AG04450 (cell line): ENCODE measurements at regions of chr2 and their contacts with region 1.

Region 1: DNA sequence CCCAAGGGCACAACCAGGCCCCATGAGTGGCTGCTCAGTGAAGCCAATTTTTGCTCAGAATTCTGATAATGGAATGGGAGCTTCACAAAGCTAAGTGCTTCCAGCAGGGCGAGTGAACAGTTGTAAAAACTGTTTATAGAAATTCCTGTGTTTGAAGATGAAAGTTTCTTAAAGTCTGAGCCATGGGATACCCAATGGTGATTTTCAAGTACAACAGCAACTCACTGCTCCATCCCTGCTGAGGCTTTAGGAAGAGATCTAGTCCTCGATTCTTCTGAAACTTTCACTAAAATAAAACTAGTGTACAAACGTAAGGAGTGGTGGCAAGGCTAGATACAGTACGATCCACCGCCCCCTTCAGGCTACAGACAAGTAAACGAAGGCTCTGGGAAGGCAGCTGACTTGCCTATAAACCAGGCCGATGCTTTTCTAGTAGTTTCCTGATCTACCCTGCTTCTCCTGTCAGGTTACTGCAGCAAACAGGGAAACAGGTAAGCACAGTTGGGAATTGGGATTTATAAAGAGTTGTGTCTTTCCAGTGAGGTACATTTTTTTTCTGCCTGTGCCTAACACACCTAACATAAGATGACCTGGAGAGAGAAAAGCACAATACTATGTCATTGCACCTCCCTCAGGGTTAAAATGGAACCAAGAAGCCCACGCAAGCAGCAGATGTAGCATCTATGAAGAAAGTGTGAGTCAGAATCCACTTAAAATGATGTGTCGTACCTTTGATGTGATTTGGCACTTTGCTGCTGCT is 108.7 kb downstream of the UXS1 start:
- DNase-seq: peak; percentile 3
- H3K4me3 ChIP-seq: no peak overlapping the region
- H3K27ac ChIP-seq: no peak overlapping the region
- H3K27me3 ChIP-seq: no peaks in the 10 kb centered on the region
- CTCF ChIP-seq: peak; percentile 60

Region 2: GRCh38 chr2:105576440-105577252 is 508.7 kb before region 1 on chr2:
- CTCF ChIA-PET with region 1: interaction called, 11 read pairs
- POLR2A ChIA-PET with region 1: no interaction called
- DNase-seq: no peak
- H3K4me3 ChIP-seq: no peak overlapping the region
- H3K27ac ChIP-seq: no peak overlapping the region
- H3K27me3 ChIP-seq: peaks cover 14% of the 10 kb centered on the region
- CTCF ChIP-seq: peak; percentile 49